Head of caudate nucleus (tissue), 42 donors: ENCODE measurements at regions of chr2 and their contacts with region 1.

Region 1: DNA sequence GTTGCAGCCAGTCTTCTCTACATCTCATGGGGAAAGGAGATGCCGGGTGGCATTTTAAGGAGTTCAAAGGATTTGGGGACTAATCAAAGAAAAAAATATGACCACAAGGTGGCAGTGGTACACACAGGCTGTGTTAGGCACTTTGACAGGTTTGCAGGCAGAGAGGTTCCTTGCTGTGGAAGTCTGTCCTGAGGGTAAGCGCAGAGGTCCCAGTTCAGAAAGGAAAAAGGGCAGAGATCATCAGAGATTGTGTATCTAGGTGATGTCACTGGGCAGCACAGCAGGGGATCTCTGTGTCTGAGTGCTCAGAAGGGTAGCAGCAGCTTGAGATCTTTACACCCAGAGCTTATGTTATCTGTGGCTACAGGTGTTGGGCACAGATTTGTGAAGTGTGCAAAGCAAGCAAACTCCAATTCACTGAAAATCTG is 231.4 kb downstream of the LRRTM1 start:
- DNase-seq: peak in 32 of 42 donors; percentile 23 to 83 (median 60)

Region 2: GRCh38 chr2:79935771-79936657 is 137.1 kb before region 1 on chr2:
- intact Hi-C with region 1: loop called (anchors 10 kb)
- DNase-seq: peak; percentile 35 to 92 (median 80)

Region 3: GRCh38 chr2:80168037-80168436 is 94.9 kb after region 1 on chr2:
- intact Hi-C with region 1: no loop called
- DNase-seq: no peak

Region 4: GRCh38 chr2:80303909-80304837 is 231.0 kb after region 1 on chr2 and contains the start of gene LRRTM1:
- intact Hi-C with region 1: loop called (anchors 5 kb)
- DNase-seq: peak; percentile 38 to 86 (median 70)